ENCODE measurements at regions of chr7 and their contacts with region 1.

Region 1: GRCh38 chr7:106071356-106071998 is 40.6 kb downstream of the SYPL1 start:
- DNase-seq: peak; percentile 49
- H3K4me3 ChIP-seq: no peak overlapping the region
- H3K27ac ChIP-seq: peak overlapping the region in 1 of 2 experiments; percentile 81; a peak in 2 of 4 replicates
- H3K4me1 ChIP-seq: peaks cover 20 to 61% of the 10 kb centered on the region in 2 experiments
- H3K27me3 ChIP-seq: no peaks in the 10 kb centered on the region
- CTCF ChIP-seq: no peak
- EP300 ChIP-seq: no peak
- RAD21 ChIP-seq: no peak

Region 2: DNA sequence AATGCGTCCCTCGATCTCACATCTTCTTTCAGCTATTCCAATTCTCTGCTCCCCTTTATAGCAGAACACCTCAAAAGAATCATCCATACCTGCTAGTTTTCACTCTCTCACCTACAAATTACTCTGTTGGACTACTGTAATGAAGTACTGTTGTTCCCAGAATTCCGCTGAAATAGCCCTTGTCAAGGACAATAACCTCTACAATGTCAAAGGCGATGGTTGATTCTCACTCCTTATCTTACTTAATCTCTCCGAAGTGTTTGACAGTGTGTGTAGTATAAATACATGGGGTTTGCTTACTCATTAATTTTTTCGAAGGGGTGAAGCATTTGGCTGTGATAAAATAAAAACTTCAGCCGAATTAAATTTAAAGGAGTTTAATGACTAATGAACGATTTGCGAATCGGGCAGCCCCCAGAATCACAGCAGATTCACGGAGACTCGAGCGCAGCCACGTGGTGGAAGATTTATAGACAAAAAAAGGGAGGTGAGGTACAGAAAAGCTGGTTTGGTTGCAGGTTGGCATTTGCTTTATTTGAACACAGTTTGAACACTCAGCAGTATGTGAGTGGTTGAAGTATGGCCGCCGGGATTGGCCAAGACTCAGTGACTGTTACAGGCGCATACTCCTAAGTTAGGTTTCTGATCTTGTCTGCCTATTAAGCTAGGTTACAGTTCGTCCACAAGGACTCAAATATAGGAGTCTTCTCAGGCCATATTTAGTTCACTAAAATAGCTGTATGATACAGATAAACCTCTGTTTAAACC is 10.8 kb after region 1 on chr7:
- CTCF ChIA-PET with region 1: interaction called, 18 read pairs
- POLR2A ChIA-PET with region 1: interaction called, 3 read pairs
- DNase-seq: no peak
- H3K4me3 ChIP-seq: no peak overlapping the region
- H3K27ac ChIP-seq: no peak overlapping the region
- H3K4me1 ChIP-seq: no peaks in the 10 kb centered on the region; a peak in 1 of 4 replicates
- H3K27me3 ChIP-seq: no peaks in the 10 kb centered on the region
- CTCF ChIP-seq: no peak
- EP300 ChIP-seq: no peak
- RAD21 ChIP-seq: no peak

Region 3: GRCh38 chr7:106112117-106112971 is 40.9 kb after region 1 on chr7 and contains the start of gene SYPL1:
- CTCF ChIA-PET with region 1: interaction called, 4 read pairs
- POLR2A ChIA-PET with region 1: interaction called, 10 read pairs
- DNase-seq: peak; percentile 99
- H3K4me3 ChIP-seq: peak within 1 kb of the TSS; percentile 80 to 91
- H3K27ac ChIP-seq: peak within 1 kb of the TSS; percentile 91 to 95
- H3K4me1 ChIP-seq: peaks cover 14 to 21% of the 10 kb centered on the region in 2 experiments; a peak in 3 of 4 replicates
- H3K27me3 ChIP-seq: no peaks in the 10 kb centered on the region
- CTCF ChIP-seq: peak; percentile 39
- EP300 ChIP-seq: no peak; a peak in 1 of 4 replicates
- RAD21 ChIP-seq: peak; percentile 9; the same call in 1 of the 2 replicates
- polyA plus RNA-seq, gene SYPL1: 72.4 and 98.7 TPM in 2 replicates

Region 4: DNA sequence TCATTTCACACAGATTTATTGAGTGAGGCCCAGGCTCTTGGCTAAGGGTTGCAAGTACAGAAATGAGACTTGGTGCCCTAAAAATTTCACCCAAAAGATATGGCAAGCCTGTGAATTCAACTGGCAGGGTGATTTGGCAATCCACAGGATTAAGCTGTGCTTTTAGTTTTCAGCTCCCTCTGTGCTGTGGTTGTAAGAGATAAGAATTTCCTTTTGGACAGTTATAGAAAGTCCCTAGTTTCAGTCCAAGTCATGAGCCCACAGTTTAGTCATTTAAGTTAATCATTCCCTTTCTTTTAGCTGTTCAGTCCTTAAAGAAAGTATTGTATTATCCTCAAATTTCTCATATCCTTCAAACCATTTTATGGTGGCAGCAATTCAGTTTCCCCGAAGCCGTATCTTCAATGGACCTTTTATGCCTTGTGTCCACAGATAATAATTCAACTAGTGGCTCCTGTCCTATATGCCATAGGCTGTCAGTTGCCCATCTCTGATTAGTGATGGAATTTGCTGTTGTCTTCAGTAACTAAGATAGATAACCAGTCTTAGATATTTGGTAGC is 286.7 kb after region 1 on chr7:
- CTCF ChIA-PET with region 1: no interaction called
- POLR2A ChIA-PET with region 1: no interaction called
- DNase-seq: no peak
- H3K4me3 ChIP-seq: no peak overlapping the region
- H3K27ac ChIP-seq: no peak overlapping the region
- H3K4me1 ChIP-seq: no peaks in the 10 kb centered on the region
- H3K27me3 ChIP-seq: no peaks in the 10 kb centered on the region
- CTCF ChIP-seq: no peak
- EP300 ChIP-seq: no peak
- RAD21 ChIP-seq: no peak